ENCODE measurements at regions of chr11 and their contacts with region 1.

Region 1: DNA sequence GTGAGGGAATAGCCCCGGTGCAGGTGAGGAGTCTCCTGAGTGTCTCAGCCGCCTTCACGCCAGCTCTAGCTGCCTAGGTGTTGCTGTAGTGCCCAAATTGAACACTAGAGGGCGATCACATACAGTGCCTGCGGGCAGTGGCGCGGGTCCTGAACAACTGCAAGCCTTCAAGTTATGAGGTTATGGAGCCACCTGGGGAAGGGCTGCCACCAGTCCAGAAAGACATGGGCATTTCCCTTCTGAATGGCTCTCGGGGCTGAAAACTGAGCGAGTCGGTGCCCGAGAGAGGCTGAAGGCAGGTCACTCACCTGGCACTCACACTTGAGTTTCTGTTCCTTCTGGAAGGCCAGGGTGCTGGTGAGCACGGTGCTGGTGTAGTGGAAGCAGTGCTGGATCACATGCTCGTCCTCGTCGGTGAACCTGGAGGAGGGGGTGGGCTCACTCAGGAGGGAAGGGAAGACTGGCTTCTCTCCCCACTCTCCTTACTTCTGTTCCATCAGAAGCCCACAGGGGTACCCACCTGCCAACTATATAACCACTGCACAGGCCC is 88.4 kb downstream of the PDE2A start:
- DNase-seq: peak; percentile 71 to 81 (median 77)
- H3K4me3 ChIP-seq: no peak overlapping the region
- H3K27ac ChIP-seq: no peak overlapping the region
- H3K4me1 ChIP-seq: peaks cover 0 to 25% (median 21%) of the 10 kb centered on the region in 4 experiments
- H3K27me3 ChIP-seq: peaks cover 0 to 46% (median 22%) of the 10 kb centered on the region in 5 experiments

Region 2: DNA sequence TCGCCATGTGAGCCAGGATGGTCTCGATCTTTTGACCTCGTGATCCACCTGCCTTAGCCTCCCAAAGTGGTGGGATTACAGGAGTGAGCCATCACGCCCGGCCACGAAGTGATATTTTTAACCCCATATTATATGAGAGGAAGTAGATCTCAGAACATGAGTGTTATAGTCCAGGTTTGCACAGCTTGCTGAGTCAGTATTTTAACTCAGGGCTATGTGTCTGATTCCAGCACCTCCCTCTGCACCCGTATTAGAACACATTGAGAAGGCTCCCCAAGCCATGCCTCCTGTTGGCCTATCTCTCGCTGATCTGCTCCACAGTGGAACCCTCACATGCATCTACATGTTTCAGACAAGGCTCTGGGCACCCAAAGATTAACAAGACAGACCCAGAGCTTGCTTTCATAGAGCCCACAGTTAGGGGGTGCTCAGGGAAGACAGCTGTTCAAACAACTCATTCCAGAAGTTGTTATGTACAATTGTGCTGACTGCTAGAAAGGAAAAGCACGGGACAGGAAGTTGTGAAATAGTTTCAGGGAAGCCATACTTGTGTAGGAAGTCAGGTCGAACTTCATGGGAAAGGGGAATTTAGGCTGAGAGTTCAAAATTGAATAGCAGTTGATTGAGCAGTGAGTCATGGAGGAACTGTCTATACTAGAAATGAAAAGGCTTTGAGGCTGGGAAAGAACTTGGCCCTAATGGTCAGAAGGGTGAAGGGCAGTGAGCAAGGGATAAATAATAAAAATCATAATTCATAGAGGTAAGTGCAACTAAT is 102.2 kb before region 1 on chr11:
- CTCF ChIA-PET with region 1: interaction called, 10 read pairs
- POLR2A ChIA-PET with region 1: no interaction called
- DNase-seq: peak; percentile 29 to 86 (median 77)
- H3K4me3 ChIP-seq: no peak overlapping the region
- H3K27ac ChIP-seq: no peak overlapping the region
- H3K4me1 ChIP-seq: peaks cover 0 to 14% (median 11%) of the 10 kb centered on the region in 4 experiments
- H3K27me3 ChIP-seq: no peaks in the 10 kb centered on the region

Region 3: GRCh38 chr11:72609045-72609444 is 23.2 kb after region 1 on chr11:
- CTCF ChIA-PET with region 1: interaction called, 19 read pairs
- POLR2A ChIA-PET with region 1: no interaction called
- DNase-seq: peak in 2 of 3 donors; percentile 57
- H3K4me3 ChIP-seq: no peak overlapping the region
- H3K27ac ChIP-seq: no peak overlapping the region
- H3K4me1 ChIP-seq: peaks cover 0 to 30% (median 20%) of the 10 kb centered on the region in 4 experiments
- H3K27me3 ChIP-seq: peaks cover 0 to 18% (median 5%) of the 10 kb centered on the region in 5 experiments

Region 4: GRCh38 chr11:72635309-72635915 is 49.6 kb after region 1 on chr11:
- CTCF ChIA-PET with region 1: interaction called, 119 read pairs
- POLR2A ChIA-PET with region 1: no interaction called
- DNase-seq: peak in 2 of 3 donors; percentile 23 to 24
- H3K4me3 ChIP-seq: no peak overlapping the region
- H3K27ac ChIP-seq: no peak overlapping the region
- H3K4me1 ChIP-seq: peaks cover 0 to 3% (median 0%) of the 10 kb centered on the region in 4 experiments
- H3K27me3 ChIP-seq: peaks cover 0 to 16% (median 5%) of the 10 kb centered on the region in 5 experiments

Region 5: DNA sequence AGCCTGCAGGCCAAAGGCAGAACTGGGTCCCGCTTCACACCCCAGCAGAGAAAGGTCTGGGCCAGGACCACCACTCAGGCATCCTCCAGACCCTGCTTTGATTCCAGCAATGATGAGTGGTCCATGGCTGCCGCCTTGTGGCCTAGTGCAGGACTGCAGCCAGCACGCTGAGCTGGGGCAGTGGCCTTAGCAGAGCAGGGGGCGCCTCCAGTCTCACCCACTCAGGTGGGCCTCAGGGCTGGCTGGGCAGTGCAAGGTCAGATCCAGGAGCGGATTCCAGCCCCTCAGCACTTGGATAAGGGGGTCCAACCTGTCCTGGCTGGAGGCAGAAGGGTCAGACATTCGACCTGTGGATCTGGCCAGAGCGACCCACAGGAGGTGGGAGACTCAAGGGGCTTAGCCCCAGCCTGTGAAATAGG is 98.0 kb after region 1 on chr11:
- CTCF ChIA-PET with region 1: interaction called, 90 read pairs
- POLR2A ChIA-PET with region 1: no interaction called
- DNase-seq: peak; percentile 39 to 66 (median 55)
- H3K4me3 ChIP-seq: no peak overlapping the region
- H3K27ac ChIP-seq: no peak overlapping the region
- H3K4me1 ChIP-seq: no peaks in the 10 kb centered on the region
- H3K27me3 ChIP-seq: peaks cover 0 to 16% (median 5%) of the 10 kb centered on the region in 5 experiments

Region 6: DNA sequence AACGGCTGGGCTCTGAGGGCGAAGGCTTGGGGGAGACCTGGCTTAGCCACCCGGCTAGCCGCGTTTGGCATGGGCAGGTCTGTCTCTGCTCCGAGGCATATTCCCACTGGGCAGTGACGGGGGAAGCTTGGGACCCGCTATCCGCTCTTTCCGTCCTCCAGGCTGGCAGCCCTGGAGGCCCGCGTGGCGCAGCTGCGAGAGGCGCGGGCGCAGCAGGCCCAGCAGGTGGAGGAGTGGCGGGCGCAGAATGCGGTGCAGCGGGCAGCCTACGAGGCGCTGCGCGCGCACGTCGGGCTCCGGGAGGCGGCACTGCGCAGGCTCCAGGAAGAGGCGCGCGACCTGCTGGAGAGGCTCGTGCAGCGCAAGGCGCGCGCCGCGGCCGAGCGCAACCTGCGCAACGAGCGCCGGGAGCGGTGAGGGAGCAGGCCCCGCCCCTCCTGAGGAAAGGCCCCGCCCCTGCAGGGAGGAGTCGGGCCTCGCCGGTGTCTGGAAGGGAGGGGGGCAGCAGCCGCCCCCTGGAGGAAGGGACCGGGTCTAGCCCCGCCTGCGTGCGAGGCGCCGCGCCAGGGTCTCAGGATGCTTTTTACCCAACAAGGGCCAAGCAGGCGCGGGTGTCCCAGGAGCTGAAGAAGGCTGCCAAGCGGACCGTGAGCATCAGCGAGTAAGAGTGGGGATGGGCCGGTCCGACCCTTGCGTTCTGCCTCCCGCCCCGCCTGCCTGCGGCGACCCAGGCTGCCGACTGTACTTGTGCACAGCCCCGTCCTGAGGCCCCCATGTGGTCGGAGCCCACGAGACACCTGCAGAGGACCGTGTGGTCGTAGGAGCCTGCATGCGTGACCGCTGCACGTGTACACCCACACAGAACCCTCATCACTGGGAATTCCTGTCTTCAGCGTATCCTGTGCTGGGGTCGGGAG is 236.3 kb after region 1 on chr11:
- CTCF ChIA-PET with region 1: no interaction called
- POLR2A ChIA-PET with region 1: no interaction called
- DNase-seq: peak; percentile 79 to 93 (median 83)
- H3K4me3 ChIP-seq: peak overlapping the region in 2 of 7 experiments; percentile 42 to 46
- H3K27ac ChIP-seq: no peak overlapping the region
- H3K4me1 ChIP-seq: peaks cover 0 to 23% (median 11%) of the 10 kb centered on the region in 4 experiments
- H3K27me3 ChIP-seq: no peaks in the 10 kb centered on the region

Measured in common myeloid progenitor, CD34-positive (primary cell).